GM10248 (cell line): ENCODE measurements at regions of chr22 and their contacts with region 1.

Region 1: DNA sequence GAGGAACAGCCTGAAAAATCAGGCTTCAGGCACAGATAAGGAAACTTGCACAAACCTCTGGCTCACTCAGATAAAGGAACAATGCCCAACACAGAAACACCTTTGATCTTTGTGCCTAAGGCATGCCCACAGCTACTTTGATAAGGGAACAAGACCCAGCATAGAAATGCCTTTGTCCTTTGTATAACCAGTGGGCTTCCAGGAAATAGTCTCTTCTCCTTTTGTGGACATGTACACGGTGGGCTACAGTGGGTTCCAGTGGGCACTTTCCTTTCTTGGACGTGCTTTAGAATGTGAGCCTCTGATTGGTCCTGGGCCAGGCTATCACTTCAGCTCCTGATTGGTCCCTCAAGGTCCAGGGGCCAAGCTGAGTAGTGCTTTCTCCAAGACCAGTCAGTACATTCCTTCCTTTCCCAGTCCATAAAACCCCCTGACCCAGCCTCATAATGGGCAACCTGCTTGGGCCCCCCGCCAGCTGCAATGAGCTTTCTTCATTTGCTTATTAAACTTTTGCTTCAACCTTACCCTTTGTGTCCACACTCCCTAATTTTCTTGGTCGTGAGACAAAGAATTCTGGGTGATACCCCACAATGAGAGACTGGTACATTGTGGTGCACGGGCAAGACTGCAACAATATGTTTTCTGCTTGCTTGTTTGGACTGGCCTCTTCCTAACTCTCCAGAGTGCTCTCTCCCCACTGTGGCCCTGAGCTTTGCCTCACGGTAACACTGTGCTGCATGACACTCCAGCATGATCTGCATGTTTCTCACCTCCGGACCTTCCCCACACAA is 1.7 kb upstream of the CABIN1 start:
- DNase-seq: no peak
- CTCF ChIP-seq: no peak

Region 2: GRCh38 chr22:24037851-24038765 is 28.7 kb after region 1 on chr22:
- CTCF ChIA-PET with region 1: interaction called, 10 read pairs
- POLR2A ChIA-PET with region 1: no interaction called
- DNase-seq: no peak
- CTCF ChIP-seq: no peak

Region 3: DNA sequence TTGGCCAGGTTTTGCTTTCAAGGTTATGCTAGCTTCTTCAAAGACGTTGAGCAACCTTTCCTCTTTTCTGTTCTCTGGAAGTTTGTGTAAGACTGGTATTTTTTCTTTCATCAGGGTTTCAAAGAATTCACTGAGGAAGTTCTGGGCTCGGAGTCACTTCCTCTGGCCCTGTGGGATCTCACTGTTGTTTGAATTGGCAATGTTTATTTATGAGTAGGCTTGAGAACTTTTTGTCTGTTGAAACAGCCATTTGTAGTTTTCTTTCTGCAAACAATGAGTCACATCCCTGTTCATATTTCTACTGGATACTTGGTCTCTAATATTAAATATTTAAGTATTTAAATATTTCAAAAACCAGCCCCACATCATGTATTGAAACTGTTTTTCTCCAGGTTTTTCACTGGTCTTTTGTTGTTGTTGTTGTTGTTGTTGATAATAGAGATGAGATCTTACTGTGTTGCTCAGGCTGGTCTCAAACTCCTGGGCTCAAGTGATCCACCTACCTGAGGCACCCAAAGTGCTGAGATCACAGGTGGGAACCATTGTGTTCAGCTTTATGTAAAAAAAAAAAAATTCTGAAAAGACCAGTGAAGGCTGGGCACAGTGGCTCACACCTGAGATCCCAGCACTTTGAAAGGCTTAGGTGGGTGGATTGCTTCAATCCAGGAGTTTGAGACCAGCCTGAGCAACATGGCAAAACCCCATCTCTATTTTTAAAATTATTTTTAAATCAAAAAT is 198.8 kb after region 1 on chr22:
- CTCF ChIA-PET with region 1: no interaction called
- POLR2A ChIA-PET with region 1: no interaction called
- DNase-seq: no peak
- CTCF ChIP-seq: no peak